IMR-90 (cell line): ENCODE measurements at regions of chrX and their contacts with region 1.

Region 1: DNA sequence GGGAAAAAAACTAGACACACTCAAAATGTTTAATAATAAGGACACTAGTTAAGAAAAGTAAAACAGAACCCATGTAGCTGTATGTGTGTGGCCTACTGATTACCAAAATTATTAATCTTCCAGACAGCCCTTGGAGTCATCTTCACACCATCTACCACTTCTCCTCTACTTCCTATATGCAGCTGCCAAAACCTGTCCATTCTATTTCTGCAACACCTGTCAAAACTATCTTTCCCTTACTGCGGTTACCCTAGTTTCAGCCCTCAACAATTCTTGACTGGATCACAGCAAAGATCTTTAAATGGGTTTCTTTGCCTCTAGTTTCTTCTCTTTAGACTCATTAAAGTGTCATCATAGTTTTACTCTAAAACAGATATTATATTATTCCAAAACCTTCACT is 72.6 kb downstream of the GPR82 start:
- DNase-seq: no peak
- ATAC-seq: no peak
- H3K4me3 ChIP-seq: no peak overlapping the region
- H3K27ac ChIP-seq: no peak overlapping the region
- H3K4me1 ChIP-seq: 0 out of 2 replicates have a peak, but pooled peaks cover 2% of the 10 kb centered on the region
- H3K27me3 ChIP-seq: no peaks in the 10 kb centered on the region
- CTCF ChIP-seq: no peak
- POLR2A ChIP-seq: no peak
- RAD21 ChIP-seq: no peak

Region 2: GRCh38 chrX:41293269-41293668 is 503.3 kb before region 1 on chrX:
- CTCF ChIA-PET with region 1: no interaction called
- POLR2A ChIA-PET with region 1: no interaction called
- dilution Hi-C with region 1: no loop called
- in situ Hi-C with region 1: no loop called
- intact Hi-C with region 1: no loop called
- DNase-seq: no peak
- ATAC-seq: peak; percentile 62
- H3K4me3 ChIP-seq: no peak overlapping the region
- H3K27ac ChIP-seq: no peak overlapping the region
- H3K4me1 ChIP-seq: no peaks in the 10 kb centered on the region
- H3K27me3 ChIP-seq: peaks cover 8% of the 10 kb centered on the region; the same call in 1 of the 2 replicates
- CTCF ChIP-seq: 0 out of 2 replicates have a peak, but pooled peaks have one; percentile 13
- POLR2A ChIP-seq: no peak
- RAD21 ChIP-seq: peak; percentile 13; the same call in 1 of the 2 replicates

Region 3: GRCh38 chrX:41923257-41923969 is 126.8 kb after region 1 on chrX and contains the start of gene CASK:
- CTCF ChIA-PET with region 1: no interaction called
- POLR2A ChIA-PET with region 1: interaction called, 4 read pairs
- dilution Hi-C with region 1: no loop called
- in situ Hi-C with region 1: no loop called
- intact Hi-C with region 1: loop called (anchors 2 kb)
- DNase-seq: peak; percentile 87
- ATAC-seq: peak; percentile 97
- H3K4me3 ChIP-seq: peak within 1 kb of the TSS; percentile 92
- H3K27ac ChIP-seq: peak within 1 kb of the TSS; percentile 82
- H3K4me1 ChIP-seq: no peaks in the 10 kb centered on the region
- H3K27me3 ChIP-seq: peaks cover 11% of the 10 kb centered on the region
- CTCF ChIP-seq: no peak
- POLR2A ChIP-seq: no peak
- RAD21 ChIP-seq: no peak
- total RNA-seq, gene CASK: 17.7 and 21.9 TPM in 2 replicates

Region 4: GRCh38 chrX:42237956-42238355 is 441.4 kb after region 1 on chrX:
- CTCF ChIA-PET with region 1: no interaction called
- POLR2A ChIA-PET with region 1: no interaction called
- dilution Hi-C with region 1: no loop called
- in situ Hi-C with region 1: no loop called
- intact Hi-C with region 1: loop called (anchors 10 kb)
- DNase-seq: peak; percentile 13
- ATAC-seq: peak; percentile 87
- H3K4me3 ChIP-seq: no peak overlapping the region
- H3K27ac ChIP-seq: peak overlapping the region; percentile 32; the same call in 1 of the 2 replicates
- H3K4me1 ChIP-seq: no peaks in the 10 kb centered on the region; the same call in 1 of the 2 replicates
- H3K27me3 ChIP-seq: peaks cover 4% of the 10 kb centered on the region
- CTCF ChIP-seq: no peak
- POLR2A ChIP-seq: no peak
- RAD21 ChIP-seq: no peak